Posterior vena cava (tissue), 2 donors: ENCODE measurements at regions of chr15 and their contacts with region 1.

Region 1: GRCh38 chr15:43255376-43255775 is 11.4 kb downstream of the TGM5 start:
- DNase-seq: peak; percentile 23

Region 2: GRCh38 chr15:42324308-42324707 is 931.1 kb before region 1 on chr15:
- intact Hi-C with region 1: loop called in 1 of 2 experiments (anchors 5 kb)
- DNase-seq: no peak

Region 3: GRCh38 chr15:43086551-43086950 is 168.8 kb before region 1 on chr15:
- intact Hi-C with region 1: no loop called
- DNase-seq: no peak